ENCODE measurements at regions of chr15 and their contacts with region 1.

Region 1: GRCh38 chr15:52331490-52332240 is 36.1 kb upstream of the MYO5C start:
- DNase-seq: peak; percentile 2 to 89 (median 38)
- ATAC-seq: peak; percentile 96
- H3K4me3 ChIP-seq: no peak overlapping the region
- H3K4me3 Mint-ChIP-seq: no peak overlapping the region
- H3K27ac ChIP-seq: peak overlapping the region in 1 of 2 donors; percentile 7
- H3K27ac Mint-ChIP-seq: no peak overlapping the region
- H3K4me1 ChIP-seq: peaks cover 8% of the 10 kb centered on the region
- H3K4me1 Mint-ChIP-seq: peaks cover 10% of the 10 kb centered on the region
- H3K27me3 ChIP-seq: no peaks in the 10 kb centered on the region
- H3K27me3 Mint-ChIP-seq: no peaks in the 10 kb centered on the region
- CTCF ChIP-seq: peak; percentile 68

Region 2: GRCh38 chr15:52427804-52428203 is 96.1 kb after region 1 on chr15:
- CTCF ChIA-PET with region 1: no interaction called
- POLR2A ChIA-PET with region 1: no interaction called
- intact Hi-C with region 1: no loop called
- DNase-seq: no peak
- ATAC-seq: no peak
- H3K4me3 ChIP-seq: no peak overlapping the region
- H3K4me3 Mint-ChIP-seq: no peak overlapping the region
- H3K27ac ChIP-seq: no peak overlapping the region
- H3K27ac Mint-ChIP-seq: no peak overlapping the region
- H3K4me1 ChIP-seq: no peaks in the 10 kb centered on the region
- H3K4me1 Mint-ChIP-seq: peaks cover 4% of the 10 kb centered on the region
- H3K27me3 ChIP-seq: no peaks in the 10 kb centered on the region
- H3K27me3 Mint-ChIP-seq: no peaks in the 10 kb centered on the region
- CTCF ChIP-seq: no peak

Region 3: GRCh38 chr15:52440400-52440799 is 108.7 kb after region 1 on chr15:
- CTCF ChIA-PET with region 1: no interaction called
- POLR2A ChIA-PET with region 1: no interaction called
- intact Hi-C with region 1: no loop called
- DNase-seq: peak in 4 of 14 experiments; percentile 3 to 29 (median 16)
- ATAC-seq: no peak
- H3K4me3 ChIP-seq: no peak overlapping the region
- H3K4me3 Mint-ChIP-seq: no peak overlapping the region
- H3K27ac ChIP-seq: no peak overlapping the region
- H3K27ac Mint-ChIP-seq: no peak overlapping the region
- H3K4me1 ChIP-seq: peaks cover 12% of the 10 kb centered on the region
- H3K4me1 Mint-ChIP-seq: peaks cover 45% of the 10 kb centered on the region
- H3K27me3 ChIP-seq: no peaks in the 10 kb centered on the region
- H3K27me3 Mint-ChIP-seq: no peaks in the 10 kb centered on the region
- CTCF ChIP-seq: no peak

Region 4: DNA sequence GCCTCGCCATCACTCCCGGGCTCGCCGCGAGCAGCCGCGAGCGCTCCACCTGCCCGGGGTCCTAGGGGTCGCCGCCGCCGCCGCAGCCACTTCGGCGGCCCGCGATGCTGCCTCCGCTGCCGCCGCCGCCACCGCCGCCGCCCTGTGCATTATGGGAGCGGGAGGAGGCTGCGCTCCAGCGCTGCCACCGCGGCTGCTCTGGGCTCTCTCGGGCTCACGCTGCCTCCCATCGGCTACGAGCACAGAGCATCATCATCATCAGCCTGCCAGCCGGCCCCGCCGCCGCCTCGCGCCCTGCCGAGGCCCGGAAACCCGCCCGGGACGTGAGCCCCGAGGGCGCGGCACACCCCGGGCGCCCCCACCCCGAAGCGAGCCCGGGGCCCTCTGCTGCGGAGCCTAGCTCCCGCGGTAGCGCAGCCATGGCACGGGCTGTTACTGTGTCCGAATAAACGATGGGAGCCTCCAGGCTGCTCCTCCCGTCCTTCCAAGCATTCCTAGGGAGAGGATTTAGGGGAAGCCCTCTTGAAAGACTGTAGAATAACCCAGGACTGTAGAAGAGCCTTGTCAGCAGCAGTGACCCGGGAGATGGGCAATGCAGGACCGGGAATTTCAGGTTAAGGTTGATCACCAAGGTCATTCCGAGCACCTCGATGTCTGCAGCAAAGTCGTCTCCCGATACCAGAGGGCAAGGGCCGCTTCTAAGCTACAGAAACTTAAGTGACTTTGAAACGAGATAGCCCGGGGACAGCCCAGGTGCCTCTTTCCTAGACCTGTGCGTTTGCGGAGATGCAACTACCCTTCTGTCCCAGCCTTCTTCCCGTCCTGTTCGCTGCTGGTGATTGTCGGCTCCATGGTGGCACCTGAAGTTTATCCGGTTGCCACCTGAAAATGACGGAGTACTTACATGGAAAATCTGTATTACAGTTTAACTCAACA is 197.6 kb after region 1 on chr15:
- CTCF ChIA-PET with region 1: no interaction called
- POLR2A ChIA-PET with region 1: no interaction called
- intact Hi-C with region 1: loop called in 1 of 2 experiments (anchors 5 kb)
- DNase-seq: peak; percentile 64 to 94 (median 78)
- ATAC-seq: peak; percentile 87
- H3K4me3 ChIP-seq: peak overlapping the region; percentile 75
- H3K4me3 Mint-ChIP-seq: peak overlapping the region; percentile 89
- H3K27ac ChIP-seq: peak overlapping the region; percentile 64 to 88
- H3K27ac Mint-ChIP-seq: peak overlapping the region; percentile 84
- H3K4me1 ChIP-seq: peaks cover 22% of the 10 kb centered on the region
- H3K4me1 Mint-ChIP-seq: peaks cover 32% of the 10 kb centered on the region
- H3K27me3 ChIP-seq: no peaks in the 10 kb centered on the region
- H3K27me3 Mint-ChIP-seq: no peaks in the 10 kb centered on the region
- CTCF ChIP-seq: peak; percentile 15

Region 5: DNA sequence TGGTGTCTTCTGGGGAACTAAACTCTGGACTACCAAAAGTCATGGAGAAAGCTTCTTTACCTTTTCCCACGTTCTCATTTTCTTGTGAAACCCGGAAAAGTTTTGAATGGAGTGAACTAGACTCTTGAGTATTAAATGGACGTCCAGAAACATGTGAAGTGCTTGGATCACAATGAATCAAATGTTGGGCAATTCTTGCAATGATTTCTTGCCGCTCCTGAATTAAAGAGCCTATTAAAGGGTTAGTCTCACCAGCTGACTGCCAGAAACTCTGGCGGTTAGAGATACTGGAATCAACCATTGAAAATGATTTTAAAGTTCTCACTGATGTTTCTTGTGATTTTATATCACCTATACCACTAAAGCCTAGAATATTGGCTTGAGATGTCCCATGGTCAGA is 277.9 kb after region 1 on chr15:
- CTCF ChIA-PET with region 1: no interaction called
- POLR2A ChIA-PET with region 1: no interaction called
- intact Hi-C with region 1: loop called in 1 of 2 experiments (anchors 5 kb)
- DNase-seq: no peak
- ATAC-seq: no peak
- H3K4me3 ChIP-seq: no peak overlapping the region
- H3K4me3 Mint-ChIP-seq: no peak overlapping the region
- H3K27ac ChIP-seq: no peak overlapping the region
- H3K27ac Mint-ChIP-seq: no peak overlapping the region
- H3K4me1 ChIP-seq: no peaks in the 10 kb centered on the region
- H3K4me1 Mint-ChIP-seq: no peaks in the 10 kb centered on the region
- H3K27me3 ChIP-seq: no peaks in the 10 kb centered on the region
- H3K27me3 Mint-ChIP-seq: no peaks in the 10 kb centered on the region
- CTCF ChIP-seq: no peak

Region 6: GRCh38 chr15:52679232-52680040 is 347.8 kb after region 1 on chr15 and contains the start of gene ATOSA:
- CTCF ChIA-PET with region 1: interaction called, 5 read pairs
- POLR2A ChIA-PET with region 1: no interaction called
- intact Hi-C with region 1: loop called in 1 of 2 experiments (anchors 5 kb)
- DNase-seq: peak; percentile 83 to 96 (median 90)
- ATAC-seq: peak; percentile 68
- H3K4me3 ChIP-seq: peak within 1 kb of the TSS; percentile 94
- H3K4me3 Mint-ChIP-seq: peak within 1 kb of the TSS; percentile 96
- H3K27ac ChIP-seq: peak within 1 kb of the TSS; percentile 97 to 99
- H3K27ac Mint-ChIP-seq: peak within 1 kb of the TSS; percentile 97
- H3K4me1 ChIP-seq: peaks cover 14% of the 10 kb centered on the region
- H3K4me1 Mint-ChIP-seq: peaks cover 75% of the 10 kb centered on the region
- H3K27me3 ChIP-seq: no peaks in the 10 kb centered on the region
- H3K27me3 Mint-ChIP-seq: no peaks in the 10 kb centered on the region
- CTCF ChIP-seq: no peak
- total RNA-seq, gene ATOSA: 137 TPM

Region 7: GRCh38 chr15:52735231-52736089 is 403.8 kb after region 1 on chr15:
- CTCF ChIA-PET with region 1: interaction called, 12 read pairs
- POLR2A ChIA-PET with region 1: no interaction called
- intact Hi-C with region 1: loop called (anchors 1 kb)
- DNase-seq: peak; percentile 37 to 88 (median 58)
- ATAC-seq: peak; percentile 95
- H3K4me3 ChIP-seq: no peak overlapping the region
- H3K4me3 Mint-ChIP-seq: no peak overlapping the region
- H3K27ac ChIP-seq: no peak overlapping the region
- H3K27ac Mint-ChIP-seq: no peak overlapping the region
- H3K4me1 ChIP-seq: peaks cover 3% of the 10 kb centered on the region
- H3K4me1 Mint-ChIP-seq: peaks cover 2% of the 10 kb centered on the region
- H3K27me3 ChIP-seq: no peaks in the 10 kb centered on the region
- H3K27me3 Mint-ChIP-seq: peaks cover 4% of the 10 kb centered on the region
- CTCF ChIP-seq: peak; percentile 89

Measured in CD4-positive, alpha-beta T cell (primary cell).